ENCODE measurements at regions of chr7 and their contacts with region 1.

Region 1: GRCh38 chr7:50962962-50963374 is 180.3 kb upstream of the GRB10 start:
- DNase-seq: no peak
- H3K4me3 ChIP-seq: no peak overlapping the region
- H3K27ac ChIP-seq: no peak overlapping the region
- H3K4me1 ChIP-seq: no peaks in the 10 kb centered on the region
- H3K27me3 ChIP-seq: no peaks in the 10 kb centered on the region
- CTCF ChIP-seq: no peak
- POLR2A ChIP-seq: no peak

Region 2: DNA sequence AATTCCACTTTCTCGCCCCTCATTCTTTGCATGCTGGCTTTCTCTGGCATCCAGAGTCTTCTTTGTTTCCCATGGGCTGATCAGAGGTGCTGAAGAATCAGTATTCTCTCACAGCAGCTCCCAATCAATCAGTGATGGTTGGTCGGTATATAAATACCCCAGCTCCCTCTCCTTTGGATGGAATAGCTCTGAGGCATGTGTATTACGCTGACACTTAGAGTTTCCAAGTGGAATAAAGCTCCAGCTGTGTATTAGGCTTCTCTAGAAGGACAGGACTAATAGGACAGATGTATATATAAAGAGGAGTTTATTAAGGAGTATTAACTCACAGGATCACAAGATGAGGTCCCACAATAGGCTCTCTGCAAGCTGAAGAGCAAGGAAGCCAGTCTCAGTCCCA is 38.0 kb after region 1 on chr7:
- intact Hi-C with region 1: no loop called
- DNase-seq: no peak
- H3K4me3 ChIP-seq: no peak overlapping the region
- H3K27ac ChIP-seq: no peak overlapping the region
- H3K4me1 ChIP-seq: no peaks in the 10 kb centered on the region
- H3K27me3 ChIP-seq: no peaks in the 10 kb centered on the region
- CTCF ChIP-seq: no peak
- POLR2A ChIP-seq: no peak

Region 3: GRCh38 chr7:51789489-51789888 is 826.5 kb after region 1 on chr7:
- intact Hi-C with region 1: loop called (anchors 10 kb)
- DNase-seq: no peak
- H3K4me3 ChIP-seq: no peak overlapping the region
- H3K27ac ChIP-seq: no peak overlapping the region
- H3K4me1 ChIP-seq: no peaks in the 10 kb centered on the region
- H3K27me3 ChIP-seq: no peaks in the 10 kb centered on the region
- CTCF ChIP-seq: no peak
- POLR2A ChIP-seq: no peak